IMR-90 (cell line): ENCODE measurements at regions of chr16 and their contacts with region 1.

Region 1: GRCh38 chr16:89490387-89491237 is at the start of gene ANKRD11:
- DNase-seq: peak; percentile 100
- ATAC-seq: peak; percentile 95
- H3K4me3 ChIP-seq: peak within 1 kb of the TSS; percentile 66
- H3K27ac ChIP-seq: peak within 1 kb of the TSS; percentile 88
- H3K4me1 ChIP-seq: peaks cover 13% of the 10 kb centered on the region
- H3K27me3 ChIP-seq: no peaks in the 10 kb centered on the region
- CTCF ChIP-seq: no peak
- POLR2A ChIP-seq: peak; percentile 95
- RAD21 ChIP-seq: no peak
- total RNA-seq, gene ANKRD11: 28.1 and 46.8 TPM in 2 replicates

Region 2: GRCh38 chr16:89330177-89330856 is 160.3 kb before region 1 on chr16:
- CTCF ChIA-PET with region 1: interaction called, 5 read pairs
- POLR2A ChIA-PET with region 1: no interaction called
- dilution Hi-C with region 1: no loop called
- in situ Hi-C with region 1: no loop called
- intact Hi-C with region 1: loop called (anchors 2 kb)
- DNase-seq: peak; percentile 52
- ATAC-seq: no peak
- H3K4me3 ChIP-seq: no peak overlapping the region
- H3K27ac ChIP-seq: peak overlapping the region; percentile 12
- H3K4me1 ChIP-seq: peaks cover 37% of the 10 kb centered on the region
- H3K27me3 ChIP-seq: no peaks in the 10 kb centered on the region
- CTCF ChIP-seq: no peak
- POLR2A ChIP-seq: no peak
- RAD21 ChIP-seq: no peak

Region 3: DNA sequence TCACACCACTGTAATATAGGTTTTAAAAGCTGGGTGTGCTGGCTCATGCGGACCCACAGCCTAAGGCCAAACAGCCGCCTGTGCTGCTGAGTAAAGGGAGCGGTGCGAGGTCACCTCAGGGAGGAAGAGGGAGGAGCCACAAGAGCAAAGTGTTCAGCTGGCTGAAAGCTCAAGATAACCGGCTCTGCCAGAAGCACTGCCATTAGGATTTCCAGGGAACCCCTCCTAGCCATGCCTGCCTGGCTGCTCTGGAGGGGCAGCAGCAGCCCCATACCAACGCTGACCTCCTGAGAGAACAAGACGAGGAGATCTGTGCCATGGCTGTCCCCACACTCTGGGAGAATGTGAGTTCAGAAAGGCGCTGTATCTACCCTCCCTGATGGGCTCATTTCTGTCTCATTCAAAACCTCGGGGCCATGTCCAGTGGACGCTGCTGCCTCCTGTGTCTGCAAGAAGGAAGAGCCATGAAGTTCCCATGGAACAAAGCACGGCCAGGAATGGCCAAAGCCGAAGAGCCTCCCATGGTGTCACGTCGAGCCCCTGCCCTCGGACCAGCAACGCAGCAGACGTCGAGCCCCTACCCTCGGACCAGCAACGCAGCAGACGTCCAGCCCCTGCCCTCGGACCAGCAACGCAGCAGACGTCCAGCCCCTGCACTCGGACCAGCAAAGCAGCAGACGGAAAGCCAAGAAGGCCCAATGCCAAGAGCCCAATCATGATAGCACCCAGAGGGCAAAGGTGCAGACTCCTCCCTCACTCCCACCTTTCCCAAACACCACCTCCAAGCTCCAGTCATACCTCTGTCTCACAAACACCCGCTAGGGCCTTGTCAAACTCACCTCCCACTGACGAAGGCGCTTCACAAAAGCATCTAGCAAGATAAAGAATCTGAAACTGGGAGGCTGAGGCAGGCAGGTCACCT is 107.3 kb before region 1 on chr16:
- CTCF ChIA-PET with region 1: no interaction called
- POLR2A ChIA-PET with region 1: interaction called, 22 read pairs
- dilution Hi-C with region 1: no loop called
- in situ Hi-C with region 1: no loop called
- intact Hi-C with region 1: no loop called
- DNase-seq: peak; percentile 47
- ATAC-seq: peak; percentile 80
- H3K4me3 ChIP-seq: no peak overlapping the region
- H3K27ac ChIP-seq: no peak overlapping the region
- H3K4me1 ChIP-seq: peaks cover 14% of the 10 kb centered on the region
- H3K27me3 ChIP-seq: no peaks in the 10 kb centered on the region
- CTCF ChIP-seq: no peak
- POLR2A ChIP-seq: no peak
- RAD21 ChIP-seq: no peak

Region 4: GRCh38 chr16:89410794-89411309 is 79.8 kb before region 1 on chr16:
- CTCF ChIA-PET with region 1: no interaction called
- POLR2A ChIA-PET with region 1: interaction called, 11 read pairs
- dilution Hi-C with region 1: no loop called
- in situ Hi-C with region 1: no loop called
- intact Hi-C with region 1: no loop called
- DNase-seq: peak; percentile 86
- ATAC-seq: peak; percentile 68
- H3K4me3 ChIP-seq: no peak overlapping the region
- H3K27ac ChIP-seq: no peak overlapping the region
- H3K4me1 ChIP-seq: peaks cover 33% of the 10 kb centered on the region
- H3K27me3 ChIP-seq: no peaks in the 10 kb centered on the region
- CTCF ChIP-seq: no peak
- POLR2A ChIP-seq: no peak
- RAD21 ChIP-seq: no peak

Region 5: DNA sequence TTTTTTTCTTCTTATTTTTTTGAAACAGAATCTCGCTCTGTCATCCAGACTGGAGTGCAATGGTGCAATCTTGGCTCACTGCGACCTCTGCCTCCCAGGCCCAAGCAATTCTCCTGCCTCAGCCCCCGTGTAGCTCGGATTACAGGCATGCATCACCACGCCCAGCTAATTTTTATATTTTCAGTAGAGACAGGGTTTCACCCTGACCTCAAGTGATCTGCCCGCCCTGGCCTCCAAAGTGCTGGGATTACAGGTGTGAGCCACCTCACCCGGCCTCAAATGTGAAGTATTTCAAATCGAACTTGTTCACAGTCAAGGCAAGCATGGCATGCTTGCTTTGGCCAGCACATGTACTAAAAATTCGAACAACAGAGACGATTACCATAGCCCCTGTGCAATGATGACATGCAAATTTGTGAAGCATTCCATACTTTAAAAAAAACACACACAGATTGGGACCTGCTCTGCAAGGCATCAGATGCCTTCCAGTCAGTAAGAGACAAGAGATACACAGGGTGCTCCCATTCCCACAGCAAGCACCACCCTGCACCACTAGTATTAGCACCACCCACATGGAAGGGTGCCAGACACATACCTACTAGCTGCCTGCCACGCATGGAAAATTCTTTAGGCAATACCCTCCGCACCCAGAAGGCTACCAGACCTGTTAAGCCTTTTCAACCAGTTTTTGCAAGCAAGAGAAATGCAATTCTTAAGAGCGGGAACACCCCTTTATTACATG is 47.5 kb before region 1 on chr16:
- CTCF ChIA-PET with region 1: interaction called, 3 read pairs
- POLR2A ChIA-PET with region 1: no interaction called
- dilution Hi-C with region 1: no loop called
- in situ Hi-C with region 1: no loop called
- intact Hi-C with region 1: loop called (anchors 2 kb)
- DNase-seq: peak; percentile 75
- ATAC-seq: peak; percentile 76
- H3K4me3 ChIP-seq: no peak overlapping the region
- H3K27ac ChIP-seq: peak overlapping the region; percentile 10; the same call in 1 of the 2 replicates
- H3K4me1 ChIP-seq: peaks cover 53% of the 10 kb centered on the region
- H3K27me3 ChIP-seq: no peaks in the 10 kb centered on the region
- CTCF ChIP-seq: 0 out of 2 replicates have a peak, but pooled peaks have one; percentile 19
- POLR2A ChIP-seq: no peak
- RAD21 ChIP-seq: no peak

Region 6: GRCh38 chr16:89507834-89508590 is 17.4 kb after region 1 on chr16 and contains the start of gene SPG7:
- CTCF ChIA-PET with region 1: interaction called, 4 read pairs
- POLR2A ChIA-PET with region 1: interaction called, 4 read pairs
- dilution Hi-C with region 1: no loop called
- in situ Hi-C with region 1: no loop called
- intact Hi-C with region 1: loop called (anchors 1 kb)
- DNase-seq: peak; percentile 82
- ATAC-seq: peak; percentile 87
- H3K4me3 ChIP-seq: peak within 1 kb of the TSS; percentile 78
- H3K27ac ChIP-seq: peak within 1 kb of the TSS; percentile 91
- H3K4me1 ChIP-seq: peaks cover 15% of the 10 kb centered on the region
- H3K27me3 ChIP-seq: no peaks in the 10 kb centered on the region
- CTCF ChIP-seq: 0 out of 2 replicates have a peak, but pooled peaks have one; percentile 2
- POLR2A ChIP-seq: peak; percentile 82
- RAD21 ChIP-seq: no peak
- total RNA-seq, gene SPG7: 95.3 and 96.8 TPM in 2 replicates